Endothelial cell of umbilical vein (primary cell): ENCODE measurements at regions of chr1 and their contacts with region 1.

Region 1: GRCh38 chr1:224623743-224624333 is 7.7 kb downstream of the CNIH3 start:
- DNase-seq: peak; percentile 51
- H3K4me3 ChIP-seq: no peak overlapping the region
- H3K27ac ChIP-seq: peak overlapping the region; percentile 50
- H3K4me1 ChIP-seq: peaks cover 20% of the 10 kb centered on the region
- H3K27me3 ChIP-seq: peaks cover 11 to 17% of the 10 kb centered on the region in 2 experiments
- CTCF ChIP-seq: no peak
- POLR2A ChIP-seq: no peak

Region 2: GRCh38 chr1:224565186-224565585 is 58.7 kb before region 1 on chr1:
- CTCF ChIA-PET with region 1: no interaction called
- POLR2A ChIA-PET with region 1: no interaction called
- dilution Hi-C with region 1: no loop called
- intact Hi-C with region 1: no loop called
- DNase-seq: peak; percentile 16
- H3K4me3 ChIP-seq: no peak overlapping the region
- H3K27ac ChIP-seq: peak overlapping the region; percentile 22
- H3K4me1 ChIP-seq: peaks cover 18% of the 10 kb centered on the region
- H3K27me3 ChIP-seq: no peaks in the 10 kb centered on the region
- CTCF ChIP-seq: no peak
- POLR2A ChIP-seq: no peak

Region 3: GRCh38 chr1:224644553-224645154 is 20.8 kb after region 1 on chr1:
- CTCF ChIA-PET with region 1: interaction called, 7 read pairs
- POLR2A ChIA-PET with region 1: no interaction called
- dilution Hi-C with region 1: no loop called
- intact Hi-C with region 1: loop called (anchors 1 kb)
- DNase-seq: peak; percentile 54
- H3K4me3 ChIP-seq: no peak overlapping the region
- H3K27ac ChIP-seq: no peak overlapping the region
- H3K4me1 ChIP-seq: peaks cover under 1% of the 10 kb centered on the region
- H3K27me3 ChIP-seq: no peaks in the 10 kb centered on the region
- CTCF ChIP-seq: peak; percentile 72 to 76
- POLR2A ChIP-seq: no peak